ENCODE measurements at regions of chr13 and their contacts with region 1.

Region 1: DNA sequence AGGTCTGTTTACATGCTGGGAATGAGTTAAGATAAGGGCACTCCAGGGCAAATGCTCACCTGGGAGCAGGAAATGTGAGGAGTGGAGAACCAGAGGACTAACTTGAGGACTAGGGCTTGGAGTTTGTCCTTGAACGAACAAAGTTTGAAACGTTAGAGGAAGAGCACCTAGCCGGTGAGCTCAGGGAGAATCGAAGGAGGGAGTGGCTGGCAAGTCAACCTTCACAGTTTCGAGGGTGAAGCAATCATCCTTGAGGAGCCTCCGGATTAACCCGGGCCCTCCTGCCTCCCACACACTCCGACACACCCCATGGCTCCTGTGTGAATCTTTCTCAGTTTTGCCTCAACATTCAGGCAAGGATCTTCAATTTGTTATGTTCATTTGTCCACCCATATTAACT is 58.6 kb downstream of the LMO7 start:
- DNase-seq: no peak
- ATAC-seq: no peak
- H3K4me3 ChIP-seq: no peak overlapping the region
- H3K4me3 Mint-ChIP-seq: no peak overlapping the region
- H3K27ac ChIP-seq: no peak overlapping the region
- H3K27ac Mint-ChIP-seq: no peak overlapping the region
- H3K4me1 ChIP-seq: no peaks in the 10 kb centered on the region
- H3K4me1 Mint-ChIP-seq: no peaks in the 10 kb centered on the region
- H3K27me3 ChIP-seq: no peaks in the 10 kb centered on the region
- H3K27me3 Mint-ChIP-seq: no peaks in the 10 kb centered on the region
- CTCF ChIP-seq: no peak

Region 2: DNA sequence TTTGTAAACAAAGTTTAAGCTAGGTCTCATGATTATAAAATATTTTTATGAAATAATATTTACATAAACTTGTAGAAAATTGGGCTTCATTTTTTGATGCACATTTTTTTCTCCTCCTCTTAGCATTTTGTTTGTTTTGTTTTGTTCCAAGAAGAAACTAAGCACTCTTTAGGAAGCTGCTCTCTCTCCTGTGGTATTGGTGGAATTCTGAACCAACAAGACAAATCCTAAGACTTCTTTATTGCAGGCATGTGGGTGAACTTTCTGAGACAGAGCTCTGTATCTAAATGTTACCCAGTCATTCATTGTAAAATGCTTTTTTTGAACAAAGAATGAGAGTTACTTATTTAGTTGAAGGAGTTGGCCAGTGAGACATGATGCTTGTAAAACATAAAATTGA is 19.3 kb before region 1 on chr13:
- CTCF ChIA-PET with region 1: interaction called, 26 read pairs
- POLR2A ChIA-PET with region 1: no interaction called
- intact Hi-C with region 1: no loop called
- DNase-seq: no peak
- ATAC-seq: no peak
- H3K4me3 ChIP-seq: no peak overlapping the region
- H3K4me3 Mint-ChIP-seq: no peak overlapping the region
- H3K27ac ChIP-seq: no peak overlapping the region
- H3K27ac Mint-ChIP-seq: no peak overlapping the region
- H3K4me1 ChIP-seq: no peaks in the 10 kb centered on the region
- H3K4me1 Mint-ChIP-seq: no peaks in the 10 kb centered on the region
- H3K27me3 ChIP-seq: no peaks in the 10 kb centered on the region
- H3K27me3 Mint-ChIP-seq: no peaks in the 10 kb centered on the region
- CTCF ChIP-seq: no peak

Region 3: GRCh38 chr13:75760131-75761021 is 65.7 kb after region 1 on chr13:
- CTCF ChIA-PET with region 1: interaction called, 24 read pairs
- POLR2A ChIA-PET with region 1: interaction called, 3 read pairs
- intact Hi-C with region 1: loop called in 1 of 2 experiments (anchors 5 kb)
- DNase-seq: peak in 4 of 9 experiments; percentile 10 to 60 (median 46)
- ATAC-seq: peak; percentile 71
- H3K4me3 ChIP-seq: peak overlapping the region; percentile 32 to 40
- H3K4me3 Mint-ChIP-seq: peak overlapping the region; percentile 83
- H3K27ac ChIP-seq: peak overlapping the region in 1 of 2 experiments; percentile 50
- H3K27ac Mint-ChIP-seq: peak overlapping the region; percentile 84
- H3K4me1 ChIP-seq: peaks cover 34% of the 10 kb centered on the region
- H3K4me1 Mint-ChIP-seq: peaks cover 59% of the 10 kb centered on the region
- H3K27me3 ChIP-seq: no peaks in the 10 kb centered on the region
- H3K27me3 Mint-ChIP-seq: no peaks in the 10 kb centered on the region
- CTCF ChIP-seq: peak; percentile 17

Region 4: DNA sequence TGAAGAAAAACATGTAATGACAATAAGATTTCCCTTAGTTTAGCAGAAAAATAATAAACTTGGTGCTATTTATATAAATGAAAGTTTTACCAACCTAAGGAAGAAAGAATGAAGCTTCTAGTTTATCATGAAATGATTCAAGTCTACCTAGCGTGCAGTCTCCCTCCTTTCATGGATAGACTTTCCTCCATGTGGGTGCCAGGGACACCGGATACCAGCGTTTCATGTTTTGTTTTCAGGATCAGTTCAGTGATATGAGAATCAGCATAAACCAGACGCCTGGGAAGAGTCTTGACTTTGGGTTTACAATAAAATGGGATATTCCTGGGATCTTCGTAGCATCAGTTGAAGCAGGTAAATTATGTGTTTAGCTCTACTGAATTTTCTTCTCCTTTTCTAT is 138.1 kb after region 1 on chr13:
- CTCF ChIA-PET with region 1: interaction called, 10 read pairs
- POLR2A ChIA-PET with region 1: no interaction called
- intact Hi-C with region 1: no loop called
- DNase-seq: no peak
- ATAC-seq: no peak
- H3K4me3 ChIP-seq: no peak overlapping the region
- H3K4me3 Mint-ChIP-seq: no peak overlapping the region
- H3K27ac ChIP-seq: no peak overlapping the region
- H3K27ac Mint-ChIP-seq: no peak overlapping the region
- H3K4me1 ChIP-seq: no peaks in the 10 kb centered on the region
- H3K4me1 Mint-ChIP-seq: peaks cover 2% of the 10 kb centered on the region
- H3K27me3 ChIP-seq: no peaks in the 10 kb centered on the region
- H3K27me3 Mint-ChIP-seq: no peaks in the 10 kb centered on the region
- CTCF ChIP-seq: no peak

Region 5: DNA sequence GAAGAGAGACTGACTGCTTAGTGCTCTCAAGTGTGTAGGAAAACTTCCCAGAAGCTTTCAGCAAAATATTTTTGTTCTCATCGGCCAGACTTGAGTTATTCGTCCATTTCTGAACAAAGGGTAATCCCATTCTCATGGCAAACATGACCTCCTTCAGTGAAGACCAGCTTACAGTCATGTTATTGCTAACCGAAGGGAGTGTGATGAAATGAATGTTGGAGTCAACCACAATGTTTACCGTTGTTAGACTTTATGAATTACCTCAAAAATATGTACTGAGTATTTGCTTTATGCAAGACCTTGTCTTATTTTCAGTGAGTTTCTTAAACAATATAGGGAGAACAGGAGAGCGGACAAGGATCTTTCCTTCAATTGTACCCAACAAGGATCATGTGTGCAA is 170.0 kb after region 1 on chr13:
- CTCF ChIA-PET with region 1: interaction called, 47 read pairs
- POLR2A ChIA-PET with region 1: interaction called, 3 read pairs
- intact Hi-C with region 1: loop called in 1 of 2 experiments (anchors 5 kb)
- DNase-seq: no peak
- ATAC-seq: no peak
- H3K4me3 ChIP-seq: no peak overlapping the region
- H3K4me3 Mint-ChIP-seq: no peak overlapping the region
- H3K27ac ChIP-seq: no peak overlapping the region
- H3K27ac Mint-ChIP-seq: no peak overlapping the region
- H3K4me1 ChIP-seq: no peaks in the 10 kb centered on the region
- H3K4me1 Mint-ChIP-seq: peaks cover 2% of the 10 kb centered on the region
- H3K27me3 ChIP-seq: no peaks in the 10 kb centered on the region
- H3K27me3 Mint-ChIP-seq: peaks cover 2% of the 10 kb centered on the region
- CTCF ChIP-seq: no peak

Region 6: GRCh38 chr13:76016799-76017400 is 322.2 kb after region 1 on chr13:
- CTCF ChIA-PET with region 1: interaction called, 10 read pairs
- POLR2A ChIA-PET with region 1: no interaction called
- intact Hi-C with region 1: loop called in 1 of 2 experiments (anchors 5 kb)
- DNase-seq: peak in 3 of 9 experiments; percentile 7 to 12 (median 10)
- ATAC-seq: no peak
- H3K4me3 ChIP-seq: no peak overlapping the region
- H3K4me3 Mint-ChIP-seq: no peak overlapping the region
- H3K27ac ChIP-seq: no peak overlapping the region
- H3K27ac Mint-ChIP-seq: no peak overlapping the region
- H3K4me1 ChIP-seq: no peaks in the 10 kb centered on the region
- H3K4me1 Mint-ChIP-seq: no peaks in the 10 kb centered on the region
- H3K27me3 ChIP-seq: no peaks in the 10 kb centered on the region
- H3K27me3 Mint-ChIP-seq: no peaks in the 10 kb centered on the region
- CTCF ChIP-seq: peak; percentile 26

Measured in CD8-positive, alpha-beta T cell (primary cell).